ENCODE measurements at regions of chr19 and their contacts with region 1.

Region 1: DNA sequence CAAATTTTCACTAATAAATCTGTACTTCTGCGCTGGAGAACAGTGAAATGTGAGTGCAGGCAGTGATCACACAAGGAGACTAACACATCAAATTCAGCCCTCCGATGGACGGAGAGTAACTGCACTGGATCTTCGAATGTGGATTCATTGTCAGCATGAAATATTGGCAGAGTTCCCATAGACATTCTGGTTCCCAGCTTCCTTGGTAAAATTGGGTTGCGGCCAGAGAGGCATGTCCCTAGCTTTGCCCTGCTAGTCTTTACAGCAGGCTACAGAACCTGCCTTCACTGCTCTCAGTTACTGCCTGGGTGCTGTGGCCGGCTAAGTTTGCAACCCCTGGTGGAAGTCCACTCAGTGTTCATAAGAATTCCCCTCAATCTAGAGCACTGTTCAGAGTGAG is 32.3 kb upstream of the UQCRFS1 start:
- DNase-seq: no peak
- ATAC-seq: no peak
- H3K4me3 ChIP-seq: no peak overlapping the region
- H3K27ac ChIP-seq: no peak overlapping the region
- H3K4me1 ChIP-seq: no peaks in the 10 kb centered on the region
- H3K27me3 ChIP-seq: peaks cover 8% of the 10 kb centered on the region
- CTCF ChIP-seq: no peak

Region 2: GRCh38 chr19:28737021-28737895 is 508.0 kb before region 1 on chr19:
- CTCF ChIA-PET with region 1: no interaction called
- POLR2A ChIA-PET with region 1: no interaction called
- in situ Hi-C with region 1: no loop called
- intact Hi-C with region 1: no loop called
- DNase-seq: no peak
- ATAC-seq: peak; percentile 70
- H3K4me3 ChIP-seq: peak overlapping the region in 1 of 2 experiments; percentile 21; a peak in 1 of 4 replicates
- H3K27ac ChIP-seq: no peak overlapping the region
- H3K4me1 ChIP-seq: no peaks in the 10 kb centered on the region
- H3K27me3 ChIP-seq: no peaks in the 10 kb centered on the region
- CTCF ChIP-seq: peak; percentile 76

Region 3: DNA sequence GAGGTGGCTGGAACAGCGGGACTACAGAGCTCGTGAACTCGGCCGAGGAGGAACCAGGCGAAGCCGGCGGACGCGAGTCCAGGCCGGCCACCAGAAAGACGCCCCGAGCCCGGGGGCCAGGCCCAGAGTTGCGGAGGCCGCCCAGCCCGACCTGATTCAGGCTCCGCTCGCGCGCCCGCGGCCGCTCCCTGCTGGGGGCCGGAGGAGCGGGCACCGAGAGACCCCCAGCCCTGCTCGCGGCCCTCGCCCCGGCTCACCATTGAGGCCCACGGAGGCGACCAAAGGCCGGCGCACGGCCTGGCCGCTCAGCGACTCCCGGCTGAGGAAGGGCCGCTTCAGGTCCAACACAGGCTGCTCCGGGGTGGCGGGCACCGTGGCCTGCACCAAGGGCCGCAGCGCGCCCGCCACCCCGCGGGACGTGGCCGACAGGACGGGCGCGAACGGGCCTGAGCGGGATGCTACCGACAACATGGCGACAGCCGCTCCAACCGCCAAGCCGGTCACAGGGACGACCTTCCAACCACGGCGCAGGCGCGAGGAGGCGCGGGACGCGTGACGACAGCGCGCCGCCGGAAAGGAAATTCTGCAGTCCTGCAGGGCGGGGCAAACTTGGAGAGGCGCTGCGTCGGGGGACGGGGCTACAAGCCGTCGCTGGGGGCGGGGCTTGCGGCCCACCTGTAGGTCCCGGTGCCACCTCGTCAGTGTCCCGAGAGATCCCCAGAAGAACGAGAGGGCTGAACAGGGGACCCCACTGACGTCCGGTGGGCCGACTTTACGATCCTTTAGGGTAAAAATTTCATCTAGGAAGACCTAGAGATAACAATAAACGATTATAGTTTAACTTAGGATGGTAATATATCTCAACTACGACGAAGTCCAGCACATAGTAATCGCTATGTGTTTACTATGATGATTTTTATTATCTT is 32.3 kb before region 1 on chr19 and contains the start of gene UQCRFS1:
- CTCF ChIA-PET with region 1: interaction called, 12 read pairs
- POLR2A ChIA-PET with region 1: no interaction called
- in situ Hi-C with region 1: no loop called
- intact Hi-C with region 1: no loop called
- DNase-seq: peak; percentile 80
- ATAC-seq: peak; percentile 99
- H3K4me3 ChIP-seq: peak within 1 kb of the TSS; percentile 94 to 100
- H3K27ac ChIP-seq: peak within 1 kb of the TSS; percentile 97
- H3K4me1 ChIP-seq: peaks cover 17% of the 10 kb centered on the region; the same call in 1 of the 2 replicates
- H3K27me3 ChIP-seq: peaks cover 4% of the 10 kb centered on the region
- CTCF ChIP-seq: no peak
- total RNA-seq, gene UQCRFS1: 70.0 TPM